ENCODE measurements at regions of chr14 and their contacts with region 1.

Region 1: DNA sequence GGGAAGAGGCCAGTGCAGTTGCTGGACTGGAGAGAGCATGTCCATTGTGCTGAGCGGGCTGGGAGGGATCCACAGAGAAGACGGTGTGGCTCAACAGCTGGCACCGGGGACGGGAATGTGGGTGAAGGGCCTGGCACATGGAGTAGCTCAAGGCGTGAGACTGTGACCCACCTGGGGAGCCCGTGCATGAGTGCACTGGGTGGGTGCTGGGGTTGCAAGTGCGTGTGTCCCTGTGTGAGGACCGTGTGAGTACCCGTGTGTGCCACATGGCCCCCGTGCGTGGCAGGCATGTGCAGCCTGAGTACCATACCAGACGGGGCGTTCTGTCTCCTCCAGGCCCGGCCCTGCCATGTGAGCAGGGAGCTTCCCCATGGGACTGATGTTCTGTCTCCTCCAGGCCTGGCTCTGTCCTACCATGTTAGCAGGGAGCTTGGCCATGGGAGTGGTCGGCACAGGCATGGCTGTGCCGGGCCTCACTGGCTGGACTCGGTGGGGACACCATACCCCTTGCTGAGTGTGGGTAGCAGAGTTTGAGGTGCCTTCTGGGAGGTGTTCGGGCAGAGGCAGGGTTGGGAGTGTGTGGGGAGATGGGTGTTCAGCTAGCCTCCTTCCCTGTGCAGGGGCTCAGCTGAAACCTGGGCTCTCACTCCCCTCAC is 234.4 kb downstream of the TMEM121 start:
- DNase-seq: no peak
- H3K4me3 ChIP-seq: no peak overlapping the region
- H3K27ac ChIP-seq: no peak overlapping the region
- H3K4me1 ChIP-seq: no peaks in the 10 kb centered on the region
- H3K27me3 ChIP-seq: no peaks in the 10 kb centered on the region
- CTCF ChIP-seq: no peak
- POLR2A ChIP-seq: no peak

Region 2: GRCh38 chr14:105617201-105617777 is 143.5 kb before region 1 on chr14:
- intact Hi-C with region 1: loop called (anchors 5 kb)
- DNase-seq: no peak
- H3K4me3 ChIP-seq: no peak overlapping the region
- H3K27ac ChIP-seq: no peak overlapping the region
- H3K4me1 ChIP-seq: no peaks in the 10 kb centered on the region
- H3K27me3 ChIP-seq: no peaks in the 10 kb centered on the region
- CTCF ChIP-seq: no peak
- POLR2A ChIP-seq: no peak

Region 3: GRCh38 chr14:105797546-105797945 is 36.7 kb after region 1 on chr14:
- intact Hi-C with region 1: no loop called
- DNase-seq: no peak
- H3K4me3 ChIP-seq: no peak overlapping the region
- H3K27ac ChIP-seq: no peak overlapping the region
- H3K4me1 ChIP-seq: no peaks in the 10 kb centered on the region
- H3K27me3 ChIP-seq: no peaks in the 10 kb centered on the region
- CTCF ChIP-seq: no peak
- POLR2A ChIP-seq: no peak